AG04450 (cell line): ENCODE measurements at regions of chr1 and their contacts with region 1.

Region 1: DNA sequence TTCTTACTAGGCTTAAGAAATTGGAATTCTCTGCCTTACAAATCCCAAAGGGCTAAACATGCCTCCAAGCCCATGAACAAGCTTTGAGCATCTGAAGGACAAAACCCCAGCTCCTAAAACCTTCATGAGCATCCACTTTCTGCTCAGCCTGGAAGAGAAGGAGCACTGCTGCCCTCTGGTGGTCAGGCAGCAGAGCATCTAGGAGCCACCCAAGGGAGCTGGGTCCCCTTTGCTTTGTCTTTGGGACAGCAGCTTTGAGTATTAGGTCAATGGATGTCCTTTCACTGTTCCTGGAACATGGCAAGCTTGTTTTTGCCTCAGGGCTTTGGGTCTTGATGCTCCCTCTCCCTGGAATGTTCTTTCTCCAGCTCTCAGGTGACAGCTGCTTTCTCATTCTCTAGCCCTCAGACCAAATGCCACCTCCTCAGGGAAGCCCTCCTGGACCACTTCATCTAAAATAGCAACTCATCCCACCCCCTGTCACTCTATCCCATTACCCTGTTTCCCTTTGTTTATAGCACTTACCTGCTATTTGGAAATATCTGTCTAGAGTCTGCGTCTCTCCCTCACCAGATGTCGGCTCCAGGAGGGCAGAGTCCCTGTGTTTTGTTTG is 25.7 kb downstream of the RAB7B start:
- DNase-seq: peak; percentile 65
- H3K4me3 ChIP-seq: no peak overlapping the region
- H3K27ac ChIP-seq: no peak overlapping the region
- H3K27me3 ChIP-seq: no peaks in the 10 kb centered on the region
- CTCF ChIP-seq: peak; percentile 98

Region 2: DNA sequence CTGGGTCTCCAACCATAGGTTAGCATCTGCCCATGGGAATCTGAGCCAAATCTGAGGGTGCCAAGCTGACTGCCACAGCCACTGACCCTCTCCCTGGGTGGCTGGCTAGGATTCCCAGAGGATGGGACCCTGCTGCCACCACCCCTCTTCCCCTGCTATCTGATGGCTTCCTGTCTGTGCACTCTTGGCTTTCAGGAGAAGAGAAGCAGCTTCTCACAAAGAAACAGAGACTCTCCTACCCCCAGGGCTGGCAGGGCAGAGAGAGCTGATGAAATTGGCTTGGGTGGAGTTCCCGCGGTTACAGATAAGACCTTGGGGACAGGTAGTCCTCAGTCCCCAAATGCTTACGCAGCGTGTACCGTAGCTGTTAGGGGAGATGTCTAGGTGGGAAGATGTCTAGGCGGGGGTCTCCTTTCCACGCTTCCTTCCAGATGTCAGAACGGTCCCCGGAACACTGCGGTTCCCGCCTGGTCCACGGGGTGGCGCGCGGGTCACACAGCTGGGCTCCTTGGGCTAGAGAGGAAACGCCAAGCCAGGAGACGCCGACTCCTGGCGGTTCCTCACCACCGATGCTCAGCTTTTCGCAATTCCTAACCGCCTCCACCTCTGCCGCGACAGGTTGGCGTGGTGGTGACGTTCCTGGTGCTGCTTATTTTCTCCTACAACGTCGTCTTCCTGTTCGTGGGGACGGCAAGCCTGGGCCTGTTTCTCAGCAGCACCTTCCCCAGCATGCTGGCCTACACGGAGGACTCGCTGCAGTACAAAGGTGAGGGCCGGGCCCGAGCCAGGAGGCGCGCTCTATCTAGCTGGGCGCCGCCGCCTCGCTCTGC is 385.8 kb before region 1 on chr1:
- CTCF ChIA-PET with region 1: interaction called, 15 read pairs
- POLR2A ChIA-PET with region 1: no interaction called
- DNase-seq: no peak
- H3K4me3 ChIP-seq: peak overlapping the region; percentile 55
- H3K27ac ChIP-seq: no peak overlapping the region
- H3K27me3 ChIP-seq: no peaks in the 10 kb centered on the region
- CTCF ChIP-seq: peak; percentile 99

Region 3: DNA sequence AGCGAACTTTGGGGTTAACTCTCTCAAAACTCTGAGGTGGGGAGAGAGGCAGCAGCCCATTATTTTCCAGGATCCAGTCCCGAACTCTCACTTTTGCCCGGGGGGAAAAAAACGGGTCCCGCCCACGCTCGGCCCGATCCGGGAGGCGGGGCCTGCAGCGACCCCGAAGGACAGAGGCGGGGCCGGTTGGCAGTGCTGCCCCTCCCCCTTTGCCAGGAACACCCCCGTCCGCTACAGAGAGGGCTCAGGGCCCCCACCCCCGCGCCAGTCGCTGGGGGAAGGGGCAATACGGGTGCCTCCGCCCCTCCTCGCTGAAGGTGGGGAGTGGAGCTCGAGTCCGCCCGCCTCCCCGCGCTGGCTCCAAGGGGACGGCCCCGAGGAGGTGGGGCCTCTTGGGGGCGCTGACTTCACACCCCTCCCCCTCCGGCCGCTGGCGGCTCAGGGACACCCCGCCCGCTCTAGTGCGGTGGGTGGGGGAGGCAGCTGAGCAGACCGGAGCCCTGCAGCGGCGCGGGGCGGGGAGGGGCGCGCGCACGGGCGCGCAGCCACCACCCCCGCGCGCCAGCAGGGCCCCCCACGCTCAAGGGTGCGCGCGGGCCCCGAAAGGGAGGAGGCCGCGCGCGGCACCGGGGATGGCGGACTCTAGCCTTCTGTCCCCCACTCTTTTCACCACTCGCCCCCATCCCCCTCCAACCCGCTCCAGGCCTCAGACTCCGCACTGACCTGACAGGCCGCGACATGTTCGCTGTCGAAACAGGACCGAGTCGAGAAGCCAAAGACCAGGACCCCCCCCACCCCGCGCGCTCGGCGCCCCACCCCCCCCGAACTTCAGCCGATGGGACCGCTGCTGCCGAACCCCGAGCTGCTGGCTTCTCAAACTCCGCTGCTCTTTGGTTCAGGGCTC is 228.0 kb before region 1 on chr1:
- CTCF ChIA-PET with region 1: interaction called, 14 read pairs
- POLR2A ChIA-PET with region 1: no interaction called
- DNase-seq: peak; percentile 95
- H3K4me3 ChIP-seq: peak overlapping the region; percentile 88
- H3K27ac ChIP-seq: peak overlapping the region; percentile 91
- H3K27me3 ChIP-seq: peaks cover 2% of the 10 kb centered on the region
- CTCF ChIP-seq: no peak

Region 4: GRCh38 chr1:205812878-205813754 is 164.4 kb before region 1 on chr1 and contains the start of gene SLC41A1:
- CTCF ChIA-PET with region 1: interaction called, 35 read pairs
- POLR2A ChIA-PET with region 1: no interaction called
- DNase-seq: peak; percentile 63
- H3K4me3 ChIP-seq: peak within 1 kb of the TSS; percentile 83
- H3K27ac ChIP-seq: peak within 1 kb of the TSS; percentile 57
- H3K27me3 ChIP-seq: peaks cover 3% of the 10 kb centered on the region
- CTCF ChIP-seq: no peak
- polyA plus RNA-seq, gene SLC41A1: 23.9 and 29.0 TPM in 2 replicates

Region 5: GRCh38 chr1:205919026-205919746 is 58.3 kb before region 1 on chr1:
- CTCF ChIA-PET with region 1: interaction called, 567 read pairs
- POLR2A ChIA-PET with region 1: interaction called, 14 read pairs
- DNase-seq: peak; percentile 60
- H3K4me3 ChIP-seq: no peak overlapping the region
- H3K27ac ChIP-seq: no peak overlapping the region
- H3K27me3 ChIP-seq: peaks cover 9% of the 10 kb centered on the region
- CTCF ChIP-seq: peak; percentile 93

Region 6: DNA sequence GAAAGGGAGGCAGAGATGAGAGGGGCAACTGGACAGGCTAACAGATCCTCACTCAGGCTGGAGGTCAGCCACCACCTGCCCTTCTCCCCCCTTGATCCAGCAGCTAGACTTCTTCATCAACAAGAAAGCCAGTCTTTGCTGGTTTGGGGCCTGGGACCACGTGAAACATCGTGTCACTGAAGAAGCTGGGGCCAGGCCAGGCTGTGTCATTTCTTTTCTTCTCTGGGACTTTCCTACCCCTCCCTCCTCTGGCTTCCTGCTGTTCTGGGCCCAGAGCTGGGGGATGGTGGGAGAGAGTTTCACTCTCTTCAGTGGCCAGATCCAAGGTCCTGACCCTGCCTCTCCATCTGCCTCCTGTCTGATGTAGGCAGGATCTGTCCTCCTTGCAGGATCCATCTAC is 16.1 kb before region 1 on chr1:
- CTCF ChIA-PET with region 1: interaction called, 32 read pairs
- POLR2A ChIA-PET with region 1: interaction called, 3 read pairs
- DNase-seq: no peak
- H3K4me3 ChIP-seq: no peak overlapping the region
- H3K27ac ChIP-seq: no peak overlapping the region
- H3K27me3 ChIP-seq: peaks cover 28% of the 10 kb centered on the region
- CTCF ChIP-seq: no peak

Region 7: GRCh38 chr1:206106328-206107167 is 129.0 kb after region 1 on chr1:
- CTCF ChIA-PET with region 1: interaction called, 156 read pairs
- POLR2A ChIA-PET with region 1: no interaction called
- DNase-seq: peak; percentile 61
- H3K4me3 ChIP-seq: no peak overlapping the region
- H3K27ac ChIP-seq: no peak overlapping the region
- H3K27me3 ChIP-seq: peaks cover 43% of the 10 kb centered on the region
- CTCF ChIP-seq: peak; percentile 92